Pancreas (tissue), 10 donors: ENCODE measurements at regions of chr15 and their contacts with region 1.

Region 1: DNA sequence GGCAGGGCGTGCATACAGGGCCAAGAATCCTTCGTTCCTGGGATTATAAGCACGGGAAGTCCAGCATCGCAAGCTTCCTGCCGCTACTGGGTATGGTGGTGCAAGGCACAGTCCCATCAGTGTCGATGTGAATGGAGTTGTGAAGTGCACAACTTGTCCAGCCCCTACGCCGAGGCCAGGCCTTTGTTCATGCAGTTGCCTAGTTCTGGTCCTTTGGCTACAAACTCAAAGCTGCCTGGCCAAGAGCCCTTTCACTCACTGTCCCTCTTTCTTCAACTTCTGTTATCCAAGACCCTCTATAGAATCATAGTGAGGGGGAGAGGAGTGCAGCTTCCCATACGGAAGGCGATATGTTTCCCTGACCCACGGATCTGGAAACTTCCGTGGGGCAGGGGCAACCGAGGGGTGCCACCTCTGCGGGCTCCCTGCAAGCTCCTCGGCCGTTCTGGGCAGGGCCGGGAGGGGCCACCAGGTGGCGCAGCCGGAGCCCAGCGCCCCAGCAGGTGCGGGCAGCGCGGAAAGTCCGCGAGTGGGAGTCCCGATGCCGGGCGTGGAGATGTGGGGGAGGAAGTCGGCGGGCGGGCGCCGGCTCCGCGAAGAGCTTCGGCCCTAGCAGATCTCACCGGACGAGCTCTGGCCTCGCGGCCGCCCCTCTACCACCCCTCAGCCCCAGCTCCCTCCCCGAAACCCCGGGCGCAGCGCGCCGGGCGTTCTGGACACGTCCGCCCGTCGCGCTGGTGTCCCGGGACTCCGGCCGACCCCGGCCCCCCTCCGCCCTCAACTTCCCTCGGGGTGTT is 693 bp downstream of the RASGRP1 start:
- DNase-seq: peak; percentile 55 to 93 (median 76)
- ATAC-seq: peak; percentile 93 to 94 (median 93)
- H3K4me3 ChIP-seq: peak overlapping the region; percentile 47 to 78 (median 66)
- H3K27ac ChIP-seq: peak overlapping the region in 3 of 4 donors; percentile 35 to 64 (median 60)
- H3K4me1 ChIP-seq: peaks cover 0 to 3% (median 0%) of the 10 kb centered on the region in 3 donors
- H3K27me3 ChIP-seq: no peaks in the 10 kb centered on the region
- CTCF ChIP-seq: peak; percentile 88 to 94 (median 88)

Region 2: GRCh38 chr15:38651328-38652038 is 87.6 kb after region 1 on chr15:
- intact Hi-C with region 1: loop called in 1 of 3 experiments (anchors 5 kb)
- DNase-seq: no peak
- ATAC-seq: peak in 1 of 4 donors; percentile 18
- H3K4me3 ChIP-seq: no peak overlapping the region
- H3K27ac ChIP-seq: no peak overlapping the region
- H3K4me1 ChIP-seq: no peaks in the 10 kb centered on the region
- H3K27me3 ChIP-seq: no peaks in the 10 kb centered on the region
- CTCF ChIP-seq: no peak